Calu3 (cell line): ENCODE measurements at regions of chr2 and their contacts with region 1.

Region 1: DNA sequence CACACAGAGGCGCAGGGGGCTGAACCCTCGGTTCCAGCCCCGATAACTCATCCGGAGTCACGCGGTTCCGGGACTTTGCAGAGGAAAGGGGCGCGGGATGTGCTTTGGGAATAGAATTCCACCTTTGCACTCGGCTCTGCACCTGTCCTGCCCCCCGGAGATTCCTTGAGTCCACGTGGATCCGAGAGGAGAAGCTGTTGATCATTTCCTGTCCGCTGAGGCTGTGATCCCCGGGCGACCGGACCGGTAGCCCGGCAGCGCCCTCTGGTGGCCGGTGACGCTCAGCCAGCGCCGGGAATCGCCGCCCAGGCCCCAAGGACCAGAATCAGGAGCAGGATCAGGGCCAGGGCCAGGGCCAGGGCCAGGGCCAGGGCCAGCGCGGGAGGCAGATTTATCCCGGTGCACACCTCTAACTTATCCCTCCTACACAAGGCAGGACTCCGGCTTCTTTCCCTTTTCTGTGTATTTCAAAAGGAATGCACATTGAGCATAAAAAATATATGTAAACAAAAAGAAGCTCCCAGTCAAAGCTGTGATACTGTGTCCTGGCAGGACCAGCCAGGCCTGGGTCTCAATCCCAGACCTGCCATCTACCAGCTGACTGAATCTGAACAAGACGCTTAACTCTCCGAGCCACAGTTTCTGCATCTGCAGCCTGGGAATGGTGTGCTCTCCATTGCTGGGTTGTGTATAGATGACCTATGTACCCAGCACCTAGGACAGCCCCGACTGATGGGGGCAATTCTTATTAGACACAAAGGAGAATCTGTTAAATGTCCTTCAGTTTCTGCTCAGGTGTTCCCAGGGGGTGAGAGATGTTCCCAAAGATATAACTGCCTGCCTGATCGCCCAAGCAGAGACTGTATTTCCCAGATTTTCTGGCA is 8.5 kb upstream of the SPATA3 start:
- DNase-seq: peak; percentile 90
- H3K4me3 Mint-ChIP-seq: peak overlapping the region; percentile 66
- H3K27ac Mint-ChIP-seq: no peak overlapping the region
- H3K4me1 Mint-ChIP-seq: no peaks in the 10 kb centered on the region
- H3K27me3 Mint-ChIP-seq: peaks cover 59% of the 10 kb centered on the region
- CTCF ChIP-seq: peak; percentile 86

Region 2: DNA sequence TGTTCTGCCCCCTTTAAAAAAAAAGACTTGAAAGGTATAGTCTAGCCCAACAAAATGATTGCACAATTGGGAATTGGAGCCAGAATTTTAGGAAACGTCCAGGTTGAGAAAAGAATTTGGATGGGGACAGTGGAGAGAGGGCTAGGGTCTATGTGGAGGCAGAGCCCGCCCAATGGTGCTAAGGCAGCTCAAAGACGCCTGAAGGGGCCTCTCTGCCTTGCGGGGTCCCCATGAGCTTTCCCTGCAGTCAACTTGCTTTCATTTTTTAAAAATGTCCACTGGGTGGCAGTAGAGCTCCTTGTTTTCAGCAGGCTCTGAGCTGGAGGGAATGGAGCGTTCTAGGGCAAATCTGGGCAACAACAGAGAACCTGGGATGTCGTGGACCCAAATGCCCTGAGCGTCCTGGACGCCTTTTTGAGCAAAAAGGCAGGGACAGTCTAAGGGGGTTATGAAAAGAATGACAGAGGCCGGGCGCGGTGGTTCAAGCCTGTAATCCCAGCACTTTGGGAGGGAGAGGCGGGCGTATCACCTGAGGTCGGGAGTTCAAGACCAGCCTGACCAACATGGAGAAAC is 162.9 kb before region 1 on chr2:
- CTCF ChIA-PET with region 1: interaction called, 26 read pairs
- intact Hi-C with region 1: loop called (anchors 1 kb)
- DNase-seq: peak; percentile 66
- H3K4me3 Mint-ChIP-seq: peak overlapping the region; percentile 32
- H3K27ac Mint-ChIP-seq: no peak overlapping the region
- H3K4me1 Mint-ChIP-seq: peaks cover 8% of the 10 kb centered on the region
- H3K27me3 Mint-ChIP-seq: peaks cover 51% of the 10 kb centered on the region
- CTCF ChIP-seq: peak; percentile 75

Region 3: DNA sequence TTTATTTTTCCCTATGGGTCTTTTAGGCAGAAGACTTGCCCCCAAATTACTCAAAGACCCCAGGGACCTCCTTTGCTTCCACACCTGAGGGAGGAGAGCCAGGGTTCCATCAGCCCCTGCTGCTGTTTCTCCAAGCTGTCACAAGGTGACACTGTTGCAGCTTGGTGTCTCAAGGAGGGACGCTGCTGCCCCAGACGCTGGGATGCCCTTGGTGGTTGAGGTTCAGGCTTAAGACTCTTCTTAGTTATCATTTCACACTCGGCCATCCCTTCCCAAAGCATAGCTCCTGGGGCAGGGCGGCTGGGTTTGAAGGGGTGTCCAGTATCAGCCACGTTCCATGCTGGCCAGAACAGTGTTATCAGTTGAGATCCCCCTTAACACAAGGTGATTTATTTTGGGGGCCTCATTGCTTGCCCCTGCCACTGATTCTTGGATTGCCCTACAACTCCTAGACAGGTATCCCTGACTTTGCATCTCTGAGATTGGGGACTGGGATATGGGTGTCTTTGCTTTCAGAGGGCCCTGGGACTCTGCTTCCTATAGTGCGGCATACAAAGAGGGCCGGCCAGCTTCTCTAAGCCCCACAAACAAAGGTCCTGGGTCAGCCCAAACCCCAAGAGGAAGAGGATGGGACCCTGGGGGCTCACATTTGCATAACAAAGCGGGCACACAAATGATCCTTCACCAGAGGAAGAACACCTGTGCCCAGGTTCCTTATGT is 85.0 kb before region 1 on chr2:
- CTCF ChIA-PET with region 1: interaction called, 8 read pairs
- intact Hi-C with region 1: loop called (anchors 1 kb)
- DNase-seq: peak; percentile 50
- H3K4me3 Mint-ChIP-seq: no peak overlapping the region
- H3K27ac Mint-ChIP-seq: no peak overlapping the region
- H3K4me1 Mint-ChIP-seq: no peaks in the 10 kb centered on the region
- H3K27me3 Mint-ChIP-seq: peaks cover 93% of the 10 kb centered on the region
- CTCF ChIP-seq: peak; percentile 78